ENCODE measurements at regions of chr4 and their contacts with region 1.

Region 1: GRCh38 chr4:1260418-1261106 is 11.6 kb upstream of the CTBP1 start:
- DNase-seq: peak; percentile 61
- H3K4me3 ChIP-seq: no peak overlapping the region
- H3K27ac ChIP-seq: peak overlapping the region in 5 of 8 donors; percentile 46 to 73 (median 52)
- H3K4me1 ChIP-seq: peaks cover 0 to 5% (median 0%) of the 10 kb centered on the region in 6 donors
- H3K27me3 ChIP-seq: no peaks in the 10 kb centered on the region
- CTCF ChIP-seq: no peak
- POLR2A ChIP-seq: no peak

Region 2: GRCh38 chr4:1130316-1131186 is 130.0 kb before region 1 on chr4:
- intact Hi-C with region 1: loop called (anchors 10 kb)
- DNase-seq: peak; percentile 91
- H3K4me3 ChIP-seq: no peak overlapping the region
- H3K27ac ChIP-seq: peak overlapping the region in 1 of 8 donors; percentile 18
- H3K4me1 ChIP-seq: peaks cover 0 to 32% (median 8%) of the 10 kb centered on the region in 6 donors
- H3K27me3 ChIP-seq: peaks cover 0 to 9% (median 0%) of the 10 kb centered on the region in 7 donors
- CTCF ChIP-seq: peak; percentile 99 to 100 (median 99)
- POLR2A ChIP-seq: no peak

Region 3: DNA sequence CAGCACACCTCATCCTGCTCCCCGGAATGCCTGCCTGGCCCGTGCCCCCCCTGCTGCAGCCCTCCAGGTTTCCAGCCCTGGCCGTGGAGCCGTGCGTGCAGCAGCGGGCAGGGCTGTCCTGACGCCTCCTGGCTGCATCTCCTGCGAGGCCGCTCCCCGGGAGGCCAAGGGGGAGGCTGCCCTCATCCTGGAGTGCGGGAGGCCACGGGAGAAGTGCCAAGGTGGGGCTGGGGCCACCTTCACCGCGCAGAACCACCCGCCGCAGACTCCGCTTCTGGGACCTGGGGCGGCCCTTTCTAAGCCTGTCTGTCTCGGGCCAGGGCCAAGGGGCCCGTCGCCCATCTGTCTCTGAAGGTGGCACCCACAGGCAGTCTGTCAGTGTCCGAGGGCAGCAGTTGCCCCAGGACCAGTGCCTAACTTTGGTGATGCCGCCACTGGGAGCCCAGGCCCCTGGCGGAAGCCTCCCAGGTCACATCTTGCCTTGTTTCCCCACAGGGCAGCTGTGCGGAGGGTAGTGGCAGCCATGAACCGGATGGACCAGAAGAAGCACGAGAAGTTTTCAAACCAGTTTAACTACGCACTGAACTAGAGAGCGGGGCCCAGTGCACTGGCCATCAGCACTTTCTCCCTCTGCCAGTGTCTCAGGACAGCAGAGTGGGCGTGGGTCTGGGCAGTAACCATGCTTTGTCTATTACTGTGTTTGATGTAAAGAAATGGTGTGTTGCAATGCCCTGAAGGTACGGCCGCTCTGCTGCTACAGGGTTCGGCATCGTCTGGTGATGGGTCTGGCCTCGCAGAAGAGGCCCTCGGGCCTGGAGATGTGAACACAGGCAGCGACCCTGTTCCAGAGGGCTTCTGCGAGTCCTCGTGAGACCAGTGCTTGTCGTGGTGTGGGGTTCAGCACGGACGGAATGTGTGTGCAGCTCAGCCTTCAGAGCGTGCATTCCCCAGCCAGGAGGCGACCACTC is 125.1 kb after region 1 on chr4:
- intact Hi-C with region 1: no loop called
- DNase-seq: peak; percentile 68
- H3K4me3 ChIP-seq: no peak overlapping the region
- H3K27ac ChIP-seq: no peak overlapping the region
- H3K4me1 ChIP-seq: no peaks in the 10 kb centered on the region
- H3K27me3 ChIP-seq: no peaks in the 10 kb centered on the region
- CTCF ChIP-seq: no peak
- POLR2A ChIP-seq: no peak